GM10248 (cell line): ENCODE measurements at regions of chr2 and their contacts with region 1.

Region 1: DNA sequence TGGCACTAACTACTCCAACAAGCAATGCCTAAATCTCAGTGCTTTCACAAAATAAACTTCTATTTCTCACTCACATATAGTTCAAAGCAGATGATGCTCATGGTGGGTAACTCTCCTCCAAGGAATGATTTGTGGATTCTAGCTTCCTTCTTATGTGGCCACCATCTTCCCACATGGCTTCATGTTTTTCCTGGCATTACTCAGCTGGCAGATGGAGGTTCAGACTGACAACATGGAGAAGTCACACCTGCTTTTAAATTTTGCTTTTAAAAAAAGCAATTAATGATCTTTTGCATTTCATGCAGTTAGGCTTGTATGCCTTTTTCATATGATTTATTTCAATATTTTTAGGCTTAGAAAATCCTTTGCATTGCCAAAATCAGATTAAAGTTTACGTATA is 6.3 kb upstream of the GKN2 start:
- DNase-seq: no peak
- CTCF ChIP-seq: no peak

Region 2: DNA sequence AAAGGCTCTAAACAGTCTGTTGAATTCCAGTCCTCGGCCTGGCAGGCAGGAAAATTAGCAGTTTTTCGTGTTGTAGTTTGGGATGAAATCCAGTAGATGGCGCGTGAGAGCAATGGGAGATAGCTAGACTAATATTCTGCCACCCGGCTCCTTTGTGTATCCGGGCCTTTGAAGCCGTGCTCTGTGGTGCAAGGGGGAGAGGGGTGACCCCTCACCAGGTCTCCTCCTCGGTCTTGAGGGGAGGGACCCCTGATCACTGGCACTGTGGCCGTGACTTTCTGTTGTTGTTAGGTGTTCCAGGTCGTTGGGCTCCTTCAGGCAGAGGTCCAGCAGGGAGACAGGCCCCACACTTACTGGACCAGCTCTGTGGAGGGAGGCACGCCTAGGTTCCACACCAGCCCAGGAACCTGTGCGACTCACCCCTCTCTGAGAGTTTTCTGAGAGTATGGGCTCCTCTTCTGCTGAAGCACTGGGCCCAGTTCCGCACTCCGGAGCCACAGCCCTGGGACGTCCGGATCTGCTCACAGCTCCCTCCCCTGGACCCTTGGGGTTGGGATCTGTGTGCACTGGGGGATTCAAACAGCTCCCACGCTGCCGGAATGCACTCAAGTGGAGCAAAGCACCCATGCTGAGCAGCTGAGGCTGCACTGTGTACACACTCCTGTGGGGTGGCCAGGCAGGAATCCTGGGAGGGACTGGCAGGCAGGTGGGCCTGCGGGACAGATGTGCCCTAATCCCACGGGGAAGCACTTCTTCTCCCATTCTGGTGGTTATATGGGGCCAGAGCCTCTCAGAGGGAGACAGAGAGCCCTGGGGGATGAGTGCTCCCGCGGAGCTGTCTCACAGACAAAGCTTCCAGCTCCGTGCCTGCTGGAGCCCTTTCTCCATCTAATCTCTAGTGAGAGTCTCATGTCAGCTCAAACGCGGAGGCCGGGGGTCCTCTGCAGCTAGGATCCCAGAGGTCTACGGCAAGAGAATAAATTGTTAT is 15.1 kb before region 1 on chr2:
- CTCF ChIA-PET with region 1: interaction called, 45 read pairs
- POLR2A ChIA-PET with region 1: no interaction called
- DNase-seq: peak; percentile 55
- CTCF ChIP-seq: peak; percentile 62

Region 3: GRCh38 chr2:68971591-68972231 is 12.7 kb after region 1 on chr2:
- CTCF ChIA-PET with region 1: no interaction called
- POLR2A ChIA-PET with region 1: no interaction called
- DNase-seq: no peak
- CTCF ChIP-seq: no peak